Aorta (tissue), 5 donors: ENCODE measurements at regions of chr16 and their contacts with region 1.

Region 1: DNA sequence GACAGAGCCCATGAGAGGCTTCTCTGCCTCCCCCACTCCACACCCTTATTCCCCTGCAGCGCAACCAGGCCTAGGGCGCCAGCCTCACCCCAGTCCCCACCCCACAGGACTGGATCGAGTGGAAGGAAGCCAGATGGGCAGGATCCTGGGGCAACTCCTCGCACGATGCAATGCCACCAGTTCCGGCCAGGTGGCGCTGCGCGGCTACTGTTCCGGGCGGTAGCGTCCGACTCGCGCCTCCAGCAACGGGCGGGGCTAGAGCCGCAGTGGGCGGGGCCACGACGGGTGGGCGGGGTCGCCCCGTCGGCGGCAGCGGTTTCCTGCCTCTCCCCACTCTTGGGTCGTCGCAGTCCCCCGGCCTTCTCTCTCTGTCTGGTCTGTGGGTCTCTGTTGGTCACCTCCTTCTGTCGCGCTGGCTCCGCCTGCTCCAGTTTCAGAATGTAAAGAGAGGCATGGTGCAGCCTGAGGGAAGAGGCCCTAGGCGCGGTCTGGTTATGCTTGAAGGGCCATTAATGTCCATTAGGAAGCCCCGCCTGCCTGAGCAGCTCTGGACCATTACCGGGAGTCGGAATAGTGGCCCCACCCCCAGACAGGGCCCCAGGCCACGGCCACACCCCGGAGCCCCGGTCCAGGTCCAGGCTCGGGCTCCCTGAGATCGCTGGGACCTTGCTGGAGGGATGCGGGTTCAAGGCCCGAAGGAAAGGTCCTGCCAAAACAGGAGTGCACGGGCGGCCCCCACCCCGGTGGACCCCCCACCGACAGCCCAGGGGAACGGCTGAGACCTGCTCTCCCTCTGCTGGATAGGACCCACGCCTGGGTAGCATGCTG is 3.4 kb upstream of the NHERF2 start:
- DNase-seq: peak; percentile 94 to 99
- ATAC-seq: peak; percentile 95
- H3K4me3 ChIP-seq: no peak overlapping the region
- H3K27ac ChIP-seq: no peak overlapping the region
- H3K4me1 ChIP-seq: no peaks in the 10 kb centered on the region
- H3K27me3 ChIP-seq: no peaks in the 10 kb centered on the region

Region 2: DNA sequence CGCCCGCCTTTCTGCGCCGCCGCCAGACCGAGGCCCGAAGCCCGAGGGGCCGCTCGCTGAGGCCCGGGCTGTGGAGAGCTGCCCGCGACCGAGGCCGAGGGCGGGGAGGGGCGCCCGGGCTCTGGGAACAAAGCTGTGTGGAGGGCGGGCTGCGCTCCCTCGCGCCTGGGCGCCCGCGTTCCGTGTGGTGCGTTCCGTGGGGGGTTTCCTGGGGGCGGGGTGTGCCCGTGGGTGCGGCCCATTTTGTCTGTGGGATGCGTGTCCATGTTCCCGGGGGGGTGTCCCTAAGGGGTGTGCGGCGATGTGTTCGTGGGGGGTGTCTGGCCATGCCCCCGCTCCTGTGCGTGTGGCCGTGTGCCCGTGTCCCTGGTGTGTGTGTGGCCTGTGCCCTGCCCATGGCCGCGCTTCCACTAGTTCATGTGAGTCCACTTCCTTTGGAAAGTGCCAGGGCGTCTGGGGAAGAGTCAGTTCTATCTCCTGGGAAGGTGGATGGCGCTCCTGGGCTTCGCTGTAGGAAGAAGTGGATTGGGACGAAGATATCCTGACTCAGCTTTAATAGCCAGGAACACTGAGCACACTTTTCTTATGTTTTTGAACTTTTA is 344.7 kb before region 1 on chr16:
- intact Hi-C with region 1: no loop called
- DNase-seq: peak in 1 of 2 donors; percentile 84
- ATAC-seq: peak; percentile 37
- H3K4me3 ChIP-seq: peak overlapping the region; percentile 64 to 67
- H3K27ac ChIP-seq: no peak overlapping the region
- H3K4me1 ChIP-seq: no peaks in the 10 kb centered on the region
- H3K27me3 ChIP-seq: no peaks in the 10 kb centered on the region

Region 3: DNA sequence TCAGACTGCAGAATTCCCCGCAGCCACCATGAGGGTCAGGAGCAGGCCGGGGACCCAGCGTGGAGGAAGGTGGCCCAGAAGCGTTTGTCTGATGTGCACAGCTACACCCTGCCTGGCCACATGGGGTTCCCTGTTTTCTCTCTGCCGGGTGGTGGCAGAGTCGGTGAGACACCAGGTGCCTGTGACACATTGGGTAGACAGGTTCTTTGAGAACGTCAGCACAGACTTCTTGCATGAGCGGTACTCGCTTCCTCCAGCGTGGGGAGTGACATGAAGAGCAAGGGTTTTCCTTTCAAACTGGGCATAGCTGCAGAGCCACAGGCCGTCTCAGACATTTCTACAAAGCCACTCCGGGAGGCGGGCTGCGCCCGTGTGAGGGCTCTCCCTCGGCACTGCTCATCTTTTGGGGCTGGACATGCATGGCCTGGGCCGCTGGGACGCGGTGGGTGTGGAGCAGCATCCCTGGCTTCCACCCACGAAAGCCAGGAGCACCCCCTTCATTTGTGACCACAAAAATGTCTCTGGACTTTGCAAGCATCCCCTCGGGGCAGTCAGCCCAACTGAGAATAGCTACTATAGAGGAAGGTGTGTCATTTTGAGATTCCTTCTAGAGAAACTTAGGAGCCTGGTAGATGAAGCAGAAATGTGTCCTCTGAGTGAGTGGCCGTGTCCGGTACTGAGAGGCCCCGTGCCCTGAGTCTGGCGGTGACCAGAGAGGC is 278.0 kb before region 1 on chr16:
- intact Hi-C with region 1: no loop called
- DNase-seq: no peak
- ATAC-seq: no peak
- H3K4me3 ChIP-seq: no peak overlapping the region
- H3K27ac ChIP-seq: no peak overlapping the region
- H3K4me1 ChIP-seq: no peaks in the 10 kb centered on the region
- H3K27me3 ChIP-seq: no peaks in the 10 kb centered on the region

Region 4: GRCh38 chr16:2085669-2086068 is 62.4 kb after region 1 on chr16:
- intact Hi-C with region 1: loop called in 1 of 2 experiments (anchors 5 kb)
- DNase-seq: no peak
- ATAC-seq: no peak
- H3K4me3 ChIP-seq: no peak overlapping the region
- H3K27ac ChIP-seq: no peak overlapping the region
- H3K4me1 ChIP-seq: no peaks in the 10 kb centered on the region
- H3K27me3 ChIP-seq: no peaks in the 10 kb centered on the region

Region 5: GRCh38 chr16:2142942-2143877 is 119.9 kb after region 1 on chr16:
- intact Hi-C with region 1: loop called in 1 of 2 experiments (anchors 1 kb)
- DNase-seq: no peak
- ATAC-seq: no peak
- H3K4me3 ChIP-seq: no peak overlapping the region
- H3K27ac ChIP-seq: no peak overlapping the region
- H3K4me1 ChIP-seq: no peaks in the 10 kb centered on the region
- H3K27me3 ChIP-seq: no peaks in the 10 kb centered on the region

Region 6: DNA sequence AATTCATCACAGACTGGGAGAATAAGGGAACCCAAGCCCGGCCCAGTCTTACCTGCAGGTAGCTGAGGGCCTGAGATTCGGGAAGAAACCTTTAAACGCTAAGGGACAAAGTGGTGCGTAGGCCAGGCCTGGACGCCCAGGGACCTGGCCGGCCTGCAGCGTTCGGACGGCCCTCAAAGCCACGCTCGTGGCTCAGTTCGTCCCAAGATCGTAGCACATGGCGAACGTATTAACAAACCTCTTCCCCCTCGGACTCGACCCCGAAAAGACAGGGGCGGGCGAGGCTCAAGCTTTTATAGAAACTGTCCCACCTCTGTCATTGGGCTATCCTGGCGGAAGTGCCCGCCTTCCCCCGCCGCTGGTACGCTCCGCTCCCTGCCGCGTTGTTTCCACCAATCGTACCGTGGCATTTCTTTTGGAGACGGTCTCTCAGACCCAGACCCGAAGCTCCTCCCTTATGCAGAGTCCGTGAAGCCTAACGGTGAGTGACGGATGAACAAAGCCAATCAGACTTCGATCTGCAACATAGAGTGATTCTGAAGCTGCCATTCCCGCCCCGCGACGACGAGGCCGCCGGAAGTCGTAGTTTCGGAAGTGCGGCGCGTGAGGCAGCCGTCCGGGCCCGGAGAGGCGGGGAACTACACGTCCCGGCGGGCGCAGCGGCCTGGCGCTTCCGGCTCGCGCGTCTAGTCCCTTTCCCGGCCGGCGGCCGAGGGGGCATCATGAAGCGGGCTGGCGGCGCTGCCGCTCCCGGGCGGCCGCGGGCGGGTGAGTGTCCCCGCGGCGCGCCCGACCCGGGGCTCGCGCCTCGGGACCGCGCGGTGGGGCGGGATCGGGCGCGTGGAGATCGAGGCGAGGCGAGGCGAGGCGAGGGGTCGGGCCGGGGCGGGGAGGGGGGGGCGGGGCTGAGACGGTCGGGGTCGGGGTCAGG is 132.0 kb after region 1 on chr16 and contains the start of gene TRAF7:
- intact Hi-C with region 1: loop called in 1 of 2 experiments (anchors 5 kb)
- DNase-seq: peak; percentile 99
- ATAC-seq: peak; percentile 95
- H3K4me3 ChIP-seq: peak within 1 kb of the TSS; percentile 58 to 72
- H3K27ac ChIP-seq: peak within 1 kb of the TSS in 1 of 2 donors; percentile 33
- H3K4me1 ChIP-seq: no peaks in the 10 kb centered on the region
- H3K27me3 ChIP-seq: no peaks in the 10 kb centered on the region
- total RNA-seq, gene TRAF7: 47.7 to 54.4 TPM